SK-N-SH (cell line): ENCODE measurements at regions of chr6 and their contacts with region 1.

Region 1: DNA sequence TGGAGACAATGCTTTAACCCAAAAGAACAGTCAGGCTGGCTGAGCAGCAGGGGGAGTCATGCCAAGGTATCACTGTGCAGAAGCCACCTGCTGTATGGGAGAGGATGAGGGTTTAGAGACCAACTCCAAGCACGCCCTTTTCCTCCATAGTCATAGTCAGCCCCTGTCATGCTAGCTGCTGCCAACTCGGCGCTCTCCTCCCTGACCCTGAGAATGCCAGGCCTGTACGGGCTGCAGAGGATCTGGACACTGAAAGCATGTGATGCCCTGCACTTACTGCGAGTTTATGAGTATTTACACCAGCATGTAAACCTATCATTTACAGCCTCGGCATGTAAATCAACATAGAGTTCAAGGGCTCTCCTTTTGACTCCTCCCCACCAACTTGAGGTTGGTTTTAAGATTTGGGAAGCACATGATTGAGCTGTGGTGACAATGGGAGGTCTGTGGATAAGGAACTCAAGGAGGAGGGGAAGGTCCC is 11.7 kb upstream of the SCUBE3 start:
- DNase-seq: no peak
- H3K4me3 ChIP-seq: no peak overlapping the region
- H3K27ac ChIP-seq: no peak overlapping the region
- H3K4me1 ChIP-seq: no peaks in the 10 kb centered on the region
- H3K27me3 ChIP-seq: no peaks in the 10 kb centered on the region
- CTCF ChIP-seq: no peak
- EP300 ChIP-seq: no peak
- RAD21 ChIP-seq: no peak

Region 2: DNA sequence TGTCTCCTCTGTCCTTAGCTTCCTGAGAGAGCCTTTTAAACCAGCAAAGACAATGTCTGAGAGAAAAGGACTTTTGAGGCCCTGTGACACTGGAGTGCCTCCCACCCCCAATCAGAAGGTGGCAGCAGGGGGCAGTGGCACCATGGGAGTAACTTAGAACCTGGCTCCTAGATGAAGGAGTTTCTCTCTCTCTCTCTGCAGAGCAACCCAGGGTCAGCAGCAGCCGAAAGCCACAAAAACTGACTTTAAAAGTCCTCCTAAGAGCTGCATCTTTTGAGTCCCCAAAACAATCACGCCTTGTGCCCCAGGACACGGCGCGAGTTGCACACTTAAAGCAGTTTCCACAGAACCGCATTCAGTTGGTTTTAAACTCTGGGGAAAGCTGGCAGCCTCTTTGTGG is 55.7 kb before region 1 on chr6:
- CTCF ChIA-PET with region 1: interaction called, 68 read pairs
- POLR2A ChIA-PET with region 1: no interaction called
- DNase-seq: peak; percentile 70
- H3K4me3 ChIP-seq: no peak overlapping the region
- H3K27ac ChIP-seq: no peak overlapping the region
- H3K4me1 ChIP-seq: peaks cover 0 to 12% of the 10 kb centered on the region in 2 experiments; a peak in 2 of 4 replicates
- H3K27me3 ChIP-seq: no peaks in the 10 kb centered on the region
- CTCF ChIP-seq: peak; percentile 71
- EP300 ChIP-seq: no peak
- RAD21 ChIP-seq: peak; percentile 80

Region 3: GRCh38 chr6:35161776-35162607 is 40.1 kb before region 1 on chr6:
- CTCF ChIA-PET with region 1: interaction called, 11 read pairs
- POLR2A ChIA-PET with region 1: no interaction called
- DNase-seq: peak; percentile 34
- H3K4me3 ChIP-seq: no peak overlapping the region
- H3K27ac ChIP-seq: no peak overlapping the region
- H3K4me1 ChIP-seq: peaks cover 0 to 26% of the 10 kb centered on the region in 2 experiments; a peak in 2 of 4 replicates
- H3K27me3 ChIP-seq: no peaks in the 10 kb centered on the region
- CTCF ChIP-seq: no peak
- EP300 ChIP-seq: no peak
- RAD21 ChIP-seq: no peak

Region 4: DNA sequence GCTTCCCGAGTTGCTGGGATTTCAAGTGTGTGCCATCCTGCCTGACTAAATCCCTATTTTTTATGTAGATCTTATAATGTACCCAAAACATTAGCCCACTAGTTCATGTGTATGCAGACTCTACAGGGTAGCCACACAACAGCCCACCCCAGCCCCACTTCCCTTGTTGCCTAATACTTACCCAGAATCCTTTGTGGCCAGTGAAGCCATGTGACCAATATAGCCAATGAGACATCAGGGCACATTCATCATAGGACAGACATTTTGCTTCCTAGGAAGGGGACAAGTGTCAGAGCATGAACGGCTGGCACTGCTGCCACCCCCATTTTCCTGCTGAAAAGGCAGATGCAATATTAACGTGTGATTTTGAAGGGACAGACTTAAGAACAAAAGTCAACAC is 24.9 kb before region 1 on chr6:
- CTCF ChIA-PET with region 1: interaction called, 10 read pairs
- POLR2A ChIA-PET with region 1: no interaction called
- DNase-seq: no peak
- H3K4me3 ChIP-seq: no peak overlapping the region
- H3K27ac ChIP-seq: peak overlapping the region in 1 of 2 experiments; percentile 54; a peak in 2 of 4 replicates
- H3K4me1 ChIP-seq: peaks cover 0 to 22% of the 10 kb centered on the region in 2 experiments; a peak in 3 of 4 replicates
- H3K27me3 ChIP-seq: no peaks in the 10 kb centered on the region
- CTCF ChIP-seq: no peak
- EP300 ChIP-seq: no peak
- RAD21 ChIP-seq: no peak

Region 5: GRCh38 chr6:35213824-35214756 is 12.0 kb after region 1 on chr6 and contains the start of gene SCUBE3:
- CTCF ChIA-PET with region 1: interaction called, 57 read pairs
- POLR2A ChIA-PET with region 1: no interaction called
- DNase-seq: peak; percentile 92
- H3K4me3 ChIP-seq: peak within 1 kb of the TSS; percentile 52 to 63
- H3K27ac ChIP-seq: no peak within 1 kb of the TSS
- H3K4me1 ChIP-seq: peaks cover 0 to 4% of the 10 kb centered on the region in 2 experiments; a peak in 1 of 4 replicates
- H3K27me3 ChIP-seq: no peaks in the 10 kb centered on the region
- CTCF ChIP-seq: no peak
- EP300 ChIP-seq: no peak
- RAD21 ChIP-seq: no peak
- polyA plus RNA-seq, gene SCUBE3: 1.8 and 2.0 TPM in 2 replicates

Region 6: DNA sequence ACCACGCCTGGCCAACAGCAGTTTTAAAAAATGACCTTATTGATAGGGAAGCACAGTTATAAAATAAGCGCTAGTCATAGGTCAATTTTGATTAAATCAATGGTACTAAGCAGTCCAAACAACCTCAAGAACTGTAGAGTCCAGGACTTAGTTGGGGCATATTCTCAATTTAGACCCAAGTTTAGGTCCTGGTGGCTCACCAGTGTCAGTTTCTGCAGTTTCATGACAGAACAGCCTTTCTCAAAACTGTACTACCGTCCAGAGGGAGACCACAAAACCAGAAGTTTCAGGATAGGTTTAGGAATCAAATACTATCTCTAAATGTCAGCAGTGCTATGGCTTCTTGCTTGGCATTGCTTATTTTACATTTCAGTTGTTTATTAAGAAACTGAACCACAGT is 642.2 kb after region 1 on chr6:
- CTCF ChIA-PET with region 1: no interaction called
- POLR2A ChIA-PET with region 1: no interaction called
- DNase-seq: no peak
- H3K4me3 ChIP-seq: no peak overlapping the region
- H3K27ac ChIP-seq: no peak overlapping the region
- H3K4me1 ChIP-seq: no peaks in the 10 kb centered on the region
- H3K27me3 ChIP-seq: no peaks in the 10 kb centered on the region
- CTCF ChIP-seq: no peak
- EP300 ChIP-seq: no peak
- RAD21 ChIP-seq: no peak